ENCODE measurements at regions of chr14 and their contacts with region 1.

Region 1: DNA sequence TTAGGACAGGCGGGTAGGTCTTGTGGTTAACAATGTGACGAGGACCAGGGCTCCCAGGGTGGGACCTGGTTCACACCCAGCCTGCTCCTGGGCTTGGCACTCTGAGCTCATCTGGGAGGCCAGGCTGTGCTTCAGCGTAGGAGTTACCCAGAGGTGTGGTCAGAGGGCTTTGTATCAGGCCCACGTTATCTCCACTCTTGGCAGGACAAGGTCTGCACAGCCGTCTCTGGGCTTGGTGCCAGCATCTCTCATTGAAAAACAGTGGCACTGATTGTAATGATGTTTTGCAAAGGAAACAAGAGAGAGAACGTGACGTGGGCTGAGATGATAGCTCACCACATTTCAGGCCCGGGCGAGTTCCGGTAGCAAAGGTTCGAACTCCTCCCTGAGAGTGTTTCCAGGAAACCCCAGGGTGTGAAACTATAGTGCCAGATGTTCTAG is 227.1 kb downstream of the KTN1 start:
- DNase-seq: peak; percentile 87
- ATAC-seq: peak; percentile 42
- H3K4me3 ChIP-seq: no peak overlapping the region
- H3K27ac ChIP-seq: peak overlapping the region; percentile 60
- H3K4me1 ChIP-seq: peaks cover 40% of the 10 kb centered on the region
- H3K27me3 ChIP-seq: no peaks in the 10 kb centered on the region
- CTCF ChIP-seq: no peak

Region 2: GRCh38 chr14:55731881-55732498 is 75.1 kb before region 1 on chr14:
- CTCF ChIA-PET with region 1: no interaction called
- POLR2A ChIA-PET with region 1: no interaction called
- intact Hi-C with region 1: loop called (anchors 2 kb)
- DNase-seq: peak; percentile 80
- ATAC-seq: peak; percentile 57
- H3K4me3 ChIP-seq: no peak overlapping the region
- H3K27ac ChIP-seq: no peak overlapping the region
- H3K4me1 ChIP-seq: peaks cover 11% of the 10 kb centered on the region
- H3K27me3 ChIP-seq: no peaks in the 10 kb centered on the region
- CTCF ChIP-seq: peak; percentile 98

Region 3: GRCh38 chr14:55739960-55740648 is 67.0 kb before region 1 on chr14:
- CTCF ChIA-PET with region 1: no interaction called
- POLR2A ChIA-PET with region 1: no interaction called
- intact Hi-C with region 1: loop called (anchors 2 kb)
- DNase-seq: peak; percentile 71
- ATAC-seq: peak; percentile 75
- H3K4me3 ChIP-seq: no peak overlapping the region
- H3K27ac ChIP-seq: no peak overlapping the region
- H3K4me1 ChIP-seq: peaks cover 15% of the 10 kb centered on the region
- H3K27me3 ChIP-seq: no peaks in the 10 kb centered on the region
- CTCF ChIP-seq: no peak

Region 4: DNA sequence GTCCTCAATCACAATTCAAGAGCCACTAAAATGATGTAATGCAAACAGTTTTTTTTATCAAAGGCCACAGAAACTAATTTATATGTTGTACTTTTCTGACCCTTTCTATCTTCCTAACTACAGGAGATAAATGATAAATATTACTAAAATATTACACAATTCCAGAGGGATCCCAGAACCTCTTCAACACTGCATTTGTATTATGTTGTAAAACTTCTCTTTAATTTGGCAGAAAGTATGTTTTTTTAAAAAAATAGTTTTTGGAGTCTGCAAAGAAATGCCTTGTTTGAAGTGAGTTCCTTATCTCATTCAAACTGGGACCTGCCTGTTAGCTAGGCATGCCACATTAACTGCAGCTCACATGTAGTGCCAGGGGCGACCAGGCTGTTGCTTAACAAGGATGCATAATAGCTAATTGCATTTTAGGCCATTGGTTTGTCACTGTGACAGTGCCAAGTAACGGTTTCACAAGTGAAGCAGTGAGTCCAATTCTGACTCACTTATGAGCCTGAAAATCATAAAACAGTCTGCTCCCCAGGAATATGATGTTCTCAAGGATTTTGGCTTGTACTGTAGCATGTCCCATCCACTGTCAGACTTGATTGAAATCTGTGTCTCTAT is 39.9 kb after region 1 on chr14:
- CTCF ChIA-PET with region 1: no interaction called
- POLR2A ChIA-PET with region 1: no interaction called
- intact Hi-C with region 1: loop called (anchors 1 kb)
- DNase-seq: peak; percentile 55
- ATAC-seq: peak; percentile 40
- H3K4me3 ChIP-seq: no peak overlapping the region
- H3K27ac ChIP-seq: peak overlapping the region; percentile 56
- H3K4me1 ChIP-seq: peaks cover 32% of the 10 kb centered on the region
- H3K27me3 ChIP-seq: no peaks in the 10 kb centered on the region
- CTCF ChIP-seq: no peak

Region 5: DNA sequence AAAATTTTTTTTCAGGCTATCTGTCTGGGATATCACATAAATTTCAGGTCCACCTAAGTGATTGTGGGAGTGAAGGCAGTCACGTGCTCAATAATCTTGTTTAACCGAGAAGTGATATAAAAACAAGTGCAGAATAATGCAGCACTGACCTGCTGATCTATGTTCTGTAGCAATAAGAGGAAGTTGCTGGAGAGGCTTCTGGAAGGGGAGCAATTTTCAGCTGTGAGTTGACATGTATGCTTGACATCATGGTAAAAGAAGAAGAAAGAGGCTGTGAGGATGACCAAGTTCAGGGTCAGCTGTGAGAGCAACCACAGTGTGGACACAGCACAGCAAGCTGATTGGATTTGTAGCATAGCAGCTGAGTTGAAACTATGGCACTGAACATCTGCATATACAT is 139.2 kb after region 1 on chr14:
- CTCF ChIA-PET with region 1: no interaction called
- POLR2A ChIA-PET with region 1: no interaction called
- intact Hi-C with region 1: no loop called
- DNase-seq: no peak
- ATAC-seq: no peak
- H3K4me3 ChIP-seq: no peak overlapping the region
- H3K27ac ChIP-seq: no peak overlapping the region
- H3K4me1 ChIP-seq: no peaks in the 10 kb centered on the region
- H3K27me3 ChIP-seq: peaks cover 30% of the 10 kb centered on the region; the same call in 1 of the 2 replicates
- CTCF ChIP-seq: no peak

Region 6: GRCh38 chr14:56087671-56088471 is 280.8 kb after region 1 on chr14:
- CTCF ChIA-PET with region 1: no interaction called
- POLR2A ChIA-PET with region 1: no interaction called
- intact Hi-C with region 1: loop called (anchors 2 kb)
- DNase-seq: no peak
- ATAC-seq: no peak
- H3K4me3 ChIP-seq: no peak overlapping the region
- H3K27ac ChIP-seq: no peak overlapping the region
- H3K4me1 ChIP-seq: no peaks in the 10 kb centered on the region
- H3K27me3 ChIP-seq: peaks cover 95% of the 10 kb centered on the region
- CTCF ChIP-seq: no peak